Panc1 (cell line): ENCODE measurements at regions of chr2 and their contacts with region 1.

Region 1: GRCh38 chr2:17413036-17413435 is 105.2 kb downstream of the RAD51AP2 start:
- DNase-seq: no peak
- ATAC-seq: no peak
- H3K4me3 ChIP-seq: no peak overlapping the region
- H3K27ac ChIP-seq: no peak overlapping the region
- H3K4me1 ChIP-seq: no peaks in the 10 kb centered on the region
- H3K27me3 ChIP-seq: no peaks in the 10 kb centered on the region
- CTCF ChIP-seq: no peak

Region 2: DNA sequence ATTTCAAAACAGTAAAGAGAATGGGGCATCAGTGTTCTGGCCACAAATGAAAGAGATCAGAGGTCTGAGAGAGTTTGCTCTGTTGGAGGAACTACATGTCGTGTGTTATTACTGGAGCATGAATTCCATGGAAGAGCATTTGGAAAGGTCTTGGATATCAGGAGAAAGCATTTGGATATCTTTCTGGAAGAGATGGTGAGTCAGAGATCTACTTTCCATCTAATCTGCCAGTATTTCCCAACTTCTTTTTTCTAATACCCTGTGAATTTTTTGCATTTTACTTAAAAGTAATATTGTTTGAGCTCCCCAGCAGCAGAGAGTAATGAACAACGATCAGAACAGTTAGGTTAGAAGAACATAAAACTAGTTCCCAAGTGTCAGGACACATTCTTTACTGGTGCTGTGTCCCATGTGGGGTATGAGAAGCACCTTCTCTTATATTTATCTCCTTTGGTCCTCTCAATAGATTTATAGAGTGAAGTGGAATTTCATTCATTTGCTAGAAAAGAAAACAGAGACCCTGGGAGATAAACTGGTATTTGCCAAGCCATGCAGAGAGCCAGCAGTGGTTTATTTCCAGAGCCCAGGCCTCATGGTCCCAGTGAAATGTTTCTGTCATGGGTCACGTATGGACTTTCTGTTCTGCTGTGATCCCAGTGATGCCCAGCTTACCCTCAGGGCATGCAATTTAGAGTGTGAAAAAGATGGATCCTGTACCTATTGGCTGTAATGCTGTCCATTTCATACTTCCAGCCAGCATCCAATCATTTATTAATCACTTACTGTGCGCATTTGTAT is 1307.1 kb after region 1 on chr2:
- CTCF ChIA-PET with region 1: no interaction called
- POLR2A ChIA-PET with region 1: no interaction called
- in situ Hi-C with region 1: no loop called
- intact Hi-C with region 1: loop called (anchors 5 kb)
- DNase-seq: no peak
- ATAC-seq: no peak
- H3K4me3 ChIP-seq: no peak overlapping the region
- H3K27ac ChIP-seq: no peak overlapping the region
- H3K4me1 ChIP-seq: no peaks in the 10 kb centered on the region
- H3K27me3 ChIP-seq: no peaks in the 10 kb centered on the region
- CTCF ChIP-seq: no peak

Region 3: DNA sequence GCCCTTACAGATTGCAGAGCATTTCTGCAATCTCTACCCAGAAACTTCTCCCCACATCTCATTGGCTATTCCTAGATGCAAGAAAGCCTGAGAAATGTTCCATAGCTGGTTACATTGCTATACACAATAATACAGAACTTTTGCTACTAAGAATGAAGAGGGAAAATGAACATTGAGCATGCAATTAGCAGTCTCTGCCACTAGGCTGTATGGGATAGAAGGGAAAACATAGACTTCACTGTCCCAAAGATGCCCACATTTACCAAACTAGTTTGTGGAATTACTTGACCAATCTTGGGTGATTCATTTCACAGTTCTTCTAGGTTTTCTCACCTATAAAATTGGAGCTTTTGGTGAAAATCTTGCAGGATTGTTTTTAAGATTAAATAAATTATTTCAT is 1442.0 kb after region 1 on chr2:
- CTCF ChIA-PET with region 1: no interaction called
- POLR2A ChIA-PET with region 1: no interaction called
- in situ Hi-C with region 1: no loop called
- intact Hi-C with region 1: no loop called
- DNase-seq: no peak
- ATAC-seq: no peak
- H3K4me3 ChIP-seq: no peak overlapping the region
- H3K27ac ChIP-seq: no peak overlapping the region
- H3K4me1 ChIP-seq: no peaks in the 10 kb centered on the region
- H3K27me3 ChIP-seq: no peaks in the 10 kb centered on the region
- CTCF ChIP-seq: peak; percentile 29; the same call in 1 of the 2 replicates